RWPE1 (cell line): ENCODE measurements at regions of chr16 and their contacts with region 1.

Region 1: DNA sequence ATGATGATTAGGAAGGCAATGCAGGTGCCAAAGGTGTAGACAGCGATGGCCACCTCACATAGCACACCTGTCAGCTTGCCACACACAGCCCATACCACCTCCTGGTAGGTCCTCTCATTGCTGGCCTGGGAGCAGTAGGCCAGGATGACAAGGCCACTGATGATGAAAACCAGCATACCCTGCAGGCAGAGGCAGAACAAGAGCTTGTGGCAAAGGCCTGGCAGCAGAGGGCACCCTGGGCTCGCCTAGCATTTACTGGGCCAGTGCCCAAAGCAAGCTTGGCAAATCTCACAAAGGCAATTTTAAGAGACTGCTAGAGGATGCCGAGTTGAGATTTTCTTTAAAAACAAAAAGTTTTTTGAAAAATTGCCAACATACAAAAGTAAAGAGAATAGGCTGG is 5.9 kb downstream of the SLC38A7 start:
- DNase-seq: no peak
- H3K27ac ChIP-seq: no peak overlapping the region
- CTCF ChIP-seq: no peak

Region 2: DNA sequence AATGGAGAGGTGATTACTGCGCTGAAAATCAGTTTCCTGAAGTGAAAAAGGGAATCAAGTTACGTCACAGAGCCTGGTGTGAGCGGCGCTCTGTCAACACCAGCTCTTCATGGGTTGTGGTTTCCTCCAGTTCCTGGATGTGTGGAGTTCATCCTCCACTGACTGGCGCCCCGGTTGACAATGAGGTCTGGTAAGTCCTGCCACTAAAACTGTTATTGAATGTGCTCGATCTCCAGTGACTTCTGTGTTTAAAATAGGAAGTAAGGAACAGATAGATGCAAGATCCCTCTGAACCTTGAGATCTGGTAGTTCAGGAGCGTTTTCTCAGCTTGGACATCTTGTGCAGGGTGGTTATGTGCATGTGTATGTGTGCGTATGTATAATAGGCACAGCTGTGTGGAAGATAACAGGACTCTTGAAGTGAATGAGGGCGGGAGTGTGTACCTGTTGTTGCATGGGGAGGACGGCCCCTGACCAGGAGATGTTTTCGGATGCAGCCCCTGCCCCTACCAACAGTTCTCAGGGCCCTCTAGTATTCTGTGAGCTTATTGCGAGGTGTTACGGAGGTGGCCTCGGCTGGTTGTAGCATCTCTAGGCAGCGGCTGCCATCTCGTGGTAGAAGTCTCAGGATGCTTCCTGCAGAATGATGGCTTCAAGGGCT is 77.4 kb after region 1 on chr16:
- CTCF ChIA-PET with region 1: interaction called, 19 read pairs
- POLR2A ChIA-PET with region 1: interaction called, 3 read pairs
- DNase-seq: peak; percentile 61
- H3K27ac ChIP-seq: no peak overlapping the region
- CTCF ChIP-seq: peak; percentile 76

Region 3: DNA sequence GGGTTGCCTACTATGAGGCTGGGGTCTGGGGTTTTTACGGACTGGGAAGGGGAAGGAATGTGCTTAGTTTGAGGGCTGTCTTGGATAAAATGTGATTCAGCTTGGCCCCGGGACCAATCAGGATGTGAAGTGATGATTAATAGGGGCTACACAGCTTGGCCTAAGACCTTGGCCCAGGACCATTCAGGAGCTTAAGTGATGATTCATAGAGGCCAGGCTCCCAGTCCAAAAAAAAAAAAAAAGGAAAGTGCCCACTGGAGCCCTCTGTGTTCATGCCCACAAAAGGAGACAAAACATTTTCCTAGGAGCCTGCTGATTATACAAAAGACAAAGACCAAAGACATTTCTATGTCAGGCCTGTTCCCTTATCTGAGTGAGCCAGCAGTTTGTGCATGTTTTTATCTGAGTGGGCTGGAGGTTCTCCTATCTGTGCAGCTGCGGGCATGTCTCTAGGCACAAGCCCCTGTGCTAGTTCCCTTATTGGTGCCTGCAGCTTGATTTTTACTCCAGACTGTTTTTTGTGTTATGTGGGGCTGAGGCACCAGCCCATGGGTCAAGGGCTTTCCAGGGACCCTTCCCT is 953.6 kb after region 1 on chr16:
- CTCF ChIA-PET with region 1: interaction called, 11 read pairs
- POLR2A ChIA-PET with region 1: no interaction called
- DNase-seq: no peak
- H3K27ac ChIP-seq: no peak overlapping the region
- CTCF ChIP-seq: no peak